T-cell (primary cell): ENCODE measurements at regions of chr3 and their contacts with region 1.

Region 1: DNA sequence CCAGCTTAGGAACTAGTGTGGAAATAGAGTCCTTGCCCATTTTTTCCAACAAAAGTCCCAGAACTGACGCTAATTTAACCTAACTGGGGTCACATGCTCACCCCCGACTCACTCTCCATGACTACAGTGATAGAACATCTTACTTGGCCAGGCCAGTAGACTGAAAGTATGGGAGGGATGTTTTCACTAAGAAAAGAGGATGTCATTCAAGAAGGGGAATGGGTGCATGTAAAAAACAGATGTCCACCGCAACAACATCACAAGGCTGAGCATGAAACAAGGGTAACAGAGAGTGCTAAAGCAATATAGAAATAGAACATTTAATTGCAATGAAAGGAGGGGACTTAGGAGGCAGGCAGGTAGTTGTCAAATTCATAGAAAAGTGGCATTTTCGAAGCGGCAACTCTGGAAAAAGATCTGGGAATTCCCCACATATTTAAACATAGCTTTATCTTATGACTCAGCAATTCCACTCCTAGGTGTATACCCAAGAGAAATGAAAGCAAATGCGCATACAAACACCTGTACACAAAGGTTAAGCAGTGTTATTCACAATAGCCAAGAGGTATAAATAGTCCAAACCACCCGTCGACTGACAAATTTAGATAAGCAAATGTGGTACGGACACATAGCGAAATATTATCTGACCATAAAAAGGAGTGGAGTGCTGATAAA is 41.1 kb upstream of the UBE2E2 start:
- DNase-seq: no peak
- ATAC-seq: no peak
- H3K4me3 ChIP-seq: no peak overlapping the region
- H3K4me3 Mint-ChIP-seq: no peak overlapping the region
- H3K27ac ChIP-seq: no peak overlapping the region
- H3K27ac Mint-ChIP-seq: no peak overlapping the region
- H3K4me1 ChIP-seq: no peaks in the 10 kb centered on the region
- H3K4me1 Mint-ChIP-seq: no peaks in the 10 kb centered on the region
- H3K27me3 ChIP-seq: no peaks in the 10 kb centered on the region
- H3K27me3 Mint-ChIP-seq: peaks cover 0 to 1% of the 10 kb centered on the region in 2 donors

Region 2: GRCh38 chr3:23981955-23982354 is 819.9 kb after region 1 on chr3:
- CTCF ChIA-PET with region 1: no interaction called
- POLR2A ChIA-PET with region 1: interaction called in 1 of 2 experiments, 11 read pairs
- DNase-seq: no peak
- ATAC-seq: peak in 3 of 4 experiments; percentile 17 to 29 (median 28)
- H3K4me3 ChIP-seq: no peak overlapping the region
- H3K4me3 Mint-ChIP-seq: no peak overlapping the region
- H3K27ac ChIP-seq: no peak overlapping the region
- H3K27ac Mint-ChIP-seq: no peak overlapping the region
- H3K4me1 ChIP-seq: no peaks in the 10 kb centered on the region
- H3K4me1 Mint-ChIP-seq: peaks cover 0 to 9% (median 0%) of the 10 kb centered on the region in 3 donors
- H3K27me3 ChIP-seq: no peaks in the 10 kb centered on the region
- H3K27me3 Mint-ChIP-seq: no peaks in the 10 kb centered on the region